ENCODE measurements at regions of chr5 and their contacts with region 1.

Region 1: DNA sequence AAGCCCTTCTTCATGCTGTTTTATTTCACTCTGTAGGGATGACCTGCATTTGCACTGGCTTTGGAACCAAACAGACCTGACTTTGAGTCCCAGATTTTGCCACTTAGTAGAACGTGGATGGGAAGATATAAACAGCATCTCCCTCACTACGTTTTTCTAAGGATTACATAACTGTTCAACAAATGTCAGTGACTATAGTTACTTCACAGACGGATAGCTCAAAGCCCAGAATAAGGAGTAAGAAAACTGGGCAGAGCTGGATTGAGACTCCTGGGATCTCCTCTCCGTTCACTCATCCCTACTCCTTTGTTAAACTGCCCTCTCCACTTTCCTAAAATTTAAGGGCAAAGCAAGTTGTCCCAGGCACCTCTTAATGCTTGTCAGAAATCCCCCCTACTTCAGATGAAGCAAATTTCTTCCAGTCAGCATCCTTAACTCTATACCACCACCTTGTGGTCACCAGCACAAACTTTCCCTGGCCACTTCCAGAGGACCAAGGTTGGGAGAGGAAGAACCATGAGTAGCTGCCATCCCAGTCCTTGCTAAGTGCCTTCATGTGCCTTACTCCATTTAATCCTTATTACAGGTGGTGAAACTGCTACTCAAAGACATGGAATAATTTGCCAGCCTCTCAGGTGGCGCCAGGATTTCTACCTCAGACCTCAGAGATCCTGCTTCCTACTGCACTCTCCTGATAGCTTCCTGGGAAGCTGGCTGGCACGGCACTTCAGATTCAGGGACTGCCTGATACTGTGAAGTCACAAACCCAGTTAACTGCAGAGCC is 38.4 kb downstream of the EGR1 start:
- DNase-seq: no peak
- ATAC-seq: peak; percentile 73

Region 2: GRCh38 chr5:138408023-138408422 is 95.7 kb before region 1 on chr5:
- intact Hi-C with region 1: no loop called
- DNase-seq: no peak
- ATAC-seq: no peak

Region 3: GRCh38 chr5:138449501-138450239 is 54.0 kb before region 1 on chr5:
- intact Hi-C with region 1: loop called (anchors 1 kb)
- DNase-seq: peak; percentile 96
- ATAC-seq: peak; percentile 88

Region 4: GRCh38 chr5:138464008-138464387 is 39.7 kb before region 1 on chr5:
- intact Hi-C with region 1: loop called (anchors 1 kb)
- DNase-seq: peak; percentile 98
- ATAC-seq: peak; percentile 83

Region 5: GRCh38 chr5:138542956-138543729 is 39.5 kb after region 1 on chr5 and contains the start of gene ETF1:
- intact Hi-C with region 1: loop called (anchors 2 kb)
- DNase-seq: peak; percentile 100
- ATAC-seq: peak; percentile 96
- total RNA-seq, gene ETF1: 90.6 TPM